Posterior vena cava (tissue), 2 donors: ENCODE measurements at regions of chr6 and their contacts with region 1.

Region 1: GRCh38 chr6:17987576-17988421 is at the start of gene KIF13A:
- DNase-seq: peak; percentile 92
- total RNA-seq, gene KIF13A: 74.6 to 110 TPM

Region 2: DNA sequence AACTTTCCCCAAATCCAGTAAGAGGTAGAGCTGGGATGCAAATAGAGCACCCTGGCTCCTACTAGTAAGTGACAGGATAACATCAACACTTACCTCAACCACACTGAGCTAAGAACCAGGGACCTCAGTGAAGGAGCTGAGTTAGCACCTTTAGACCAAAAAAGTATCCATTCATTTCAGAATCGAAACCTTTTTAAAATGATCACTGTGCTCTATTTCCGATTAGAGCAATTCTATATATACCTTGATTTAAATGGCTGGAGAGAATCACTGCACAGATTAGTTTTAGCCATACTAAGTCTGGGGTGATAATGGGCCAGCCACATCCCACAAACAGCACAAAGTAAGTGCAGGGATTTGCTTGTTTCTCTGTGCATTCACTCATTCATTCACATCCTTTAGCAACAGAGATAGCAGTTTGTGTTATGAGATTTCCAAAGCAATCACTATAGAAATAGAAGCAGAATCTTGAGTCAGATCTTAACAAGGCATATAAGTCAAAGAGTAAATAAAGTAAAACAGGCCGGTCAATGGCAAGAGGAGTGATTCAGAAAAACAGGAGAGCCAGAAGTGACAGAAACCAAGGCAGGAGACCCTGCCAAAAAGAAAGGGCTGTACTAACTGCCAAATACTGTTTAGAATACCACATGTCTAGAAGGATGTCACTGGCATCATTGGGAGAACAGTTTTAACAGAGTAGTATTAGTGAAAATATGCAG is 136.6 kb before region 1 on chr6:
- intact Hi-C with region 1: loop called in 1 of 2 experiments (anchors 10 kb)
- DNase-seq: no peak

Region 3: DNA sequence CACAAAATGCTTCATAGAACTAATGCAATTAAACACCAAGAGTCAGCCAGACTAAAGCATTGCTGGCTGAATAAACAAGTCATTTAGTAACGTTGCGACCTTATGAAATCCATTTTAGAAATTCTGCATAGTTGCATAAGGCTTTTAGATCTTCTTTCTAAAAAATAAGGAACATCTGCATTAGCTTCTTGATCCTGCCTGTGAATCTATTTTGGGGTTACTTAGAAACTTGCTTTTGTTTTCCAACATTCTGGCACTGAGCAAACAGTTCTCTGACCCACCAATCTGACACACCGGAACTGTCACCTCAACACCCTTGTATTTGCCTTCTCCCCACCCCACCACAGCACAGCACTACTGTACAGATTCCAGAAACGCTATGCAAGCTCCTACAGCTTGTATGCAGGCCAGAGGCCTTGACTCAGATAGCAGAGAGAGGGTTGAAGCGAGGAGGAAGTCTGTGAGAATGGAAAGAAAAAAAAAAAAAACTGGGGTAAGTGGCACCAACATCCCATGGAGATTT is 55.4 kb before region 1 on chr6:
- intact Hi-C with region 1: loop called in 1 of 2 experiments (anchors 5 kb)
- DNase-seq: no peak